GM13977 (cell line): ENCODE measurements at regions of chrX and their contacts with region 1.

Region 1: DNA sequence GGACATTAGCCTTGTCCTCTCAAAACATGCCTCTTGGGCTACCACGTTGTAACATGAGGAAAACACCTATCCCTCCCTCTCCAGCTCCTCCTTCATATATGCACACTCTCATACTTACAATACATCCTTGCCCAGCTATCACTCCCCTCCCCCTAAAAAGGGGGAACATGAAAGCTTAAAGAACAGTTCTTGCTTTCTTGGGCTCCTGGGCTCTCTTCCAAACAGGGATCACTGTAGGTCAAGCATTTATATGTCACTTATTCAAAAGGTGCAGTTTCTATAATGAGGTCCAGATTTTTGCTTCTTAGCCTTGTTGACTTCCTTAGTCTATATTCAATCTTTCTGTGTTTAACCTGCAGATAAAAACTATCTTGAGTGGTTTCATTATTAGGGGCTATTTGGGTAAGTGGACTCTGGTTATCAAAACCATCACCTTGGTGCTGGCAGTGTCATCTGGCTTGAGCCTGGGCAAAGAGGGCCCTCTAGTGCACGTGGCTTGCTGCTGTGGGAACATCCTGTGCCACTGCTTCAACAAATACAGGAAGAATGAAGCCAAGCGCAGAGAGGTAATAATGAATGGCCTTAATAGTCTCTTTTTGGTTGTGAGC is 119.4 kb downstream of the AKAP4 start:
- DNase-seq: no peak
- CTCF ChIP-seq: peak; percentile 66

Region 2: DNA sequence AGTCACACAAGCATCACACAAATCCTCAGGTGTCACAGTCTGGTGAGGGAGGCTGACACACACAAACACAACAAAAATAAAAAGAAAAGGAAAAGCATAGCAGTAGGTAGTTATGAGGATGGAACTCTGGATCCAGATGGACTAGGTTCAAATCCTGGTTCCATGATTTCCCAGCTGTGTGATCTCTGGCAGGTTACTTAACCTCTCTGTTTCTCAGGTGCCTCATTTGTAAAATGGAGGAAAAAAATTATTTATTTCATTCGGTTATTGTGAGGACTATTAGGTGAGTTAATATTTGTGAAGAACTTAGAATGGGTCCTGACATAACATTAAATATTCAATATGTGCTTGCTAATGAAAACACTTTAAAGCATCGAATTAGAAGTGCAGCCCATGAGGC is 462.8 kb before region 1 on chrX:
- in situ Hi-C with region 1: no loop called
- DNase-seq: no peak
- CTCF ChIP-seq: no peak

Region 3: GRCh38 chrX:49922291-49923241 is 158.8 kb before region 1 on chrX and contains the start of gene CLCN5:
- in situ Hi-C with region 1: loop called (anchors 25 kb)
- DNase-seq: peak; percentile 90
- CTCF ChIP-seq: no peak